ENCODE measurements at regions of chr5 and their contacts with region 1.

Region 1: GRCh38 chr5:172129256-172129910 is 58.6 kb downstream of the STK10 start:
- DNase-seq: no peak
- H3K4me3 ChIP-seq: no peak overlapping the region
- H3K27ac ChIP-seq: no peak overlapping the region
- H3K4me1 ChIP-seq: peaks cover 8 to 45% (median 21%) of the 10 kb centered on the region in 4 experiments
- H3K27me3 ChIP-seq: no peaks in the 10 kb centered on the region

Region 2: DNA sequence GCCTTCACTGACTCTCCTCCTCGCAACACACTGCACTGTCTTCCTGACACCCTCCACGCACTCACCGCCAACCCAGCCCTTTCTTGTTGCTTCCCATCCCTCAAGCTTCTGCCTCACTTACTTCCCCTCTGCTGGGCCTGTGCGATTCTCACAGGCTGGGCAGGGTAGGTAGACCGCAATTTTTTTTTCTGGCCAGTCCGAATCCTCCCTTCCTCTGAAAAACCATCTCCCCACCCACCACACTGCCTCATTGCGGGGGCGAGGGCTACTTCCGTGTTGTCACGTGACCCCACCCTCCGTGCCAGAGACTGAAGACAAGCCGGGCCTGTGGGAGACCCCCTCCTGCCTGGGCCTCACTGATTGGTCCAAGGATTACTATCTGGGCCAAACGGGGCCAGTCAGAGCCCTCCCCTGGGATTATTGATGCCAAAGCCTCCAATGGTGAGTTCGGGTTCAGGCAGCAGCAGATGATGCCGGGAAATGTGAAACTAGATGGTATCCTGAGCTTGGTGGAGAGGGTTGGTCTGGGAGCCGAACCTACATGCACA is 14.4 kb before region 1 on chr5:
- CTCF ChIA-PET with region 1: interaction called, 15 read pairs
- POLR2A ChIA-PET with region 1: interaction called, 5 read pairs
- DNase-seq: peak; percentile 91 to 97 (median 95)
- H3K4me3 ChIP-seq: peak overlapping the region in 4 of 7 experiments; percentile 20 to 51 (median 41)
- H3K27ac ChIP-seq: peak overlapping the region; percentile 25 to 62
- H3K4me1 ChIP-seq: peaks cover 22 to 91% (median 72%) of the 10 kb centered on the region in 4 experiments
- H3K27me3 ChIP-seq: no peaks in the 10 kb centered on the region

Region 3: GRCh38 chr5:172179361-172179989 is 50.1 kb after region 1 on chr5:
- CTCF ChIA-PET with region 1: interaction called, 10 read pairs
- POLR2A ChIA-PET with region 1: interaction called, 3 read pairs
- DNase-seq: peak; percentile 85 to 89 (median 87)
- H3K4me3 ChIP-seq: peak overlapping the region in 6 of 7 experiments; percentile 19 to 71 (median 54)
- H3K27ac ChIP-seq: peak overlapping the region; percentile 77 to 88
- H3K4me1 ChIP-seq: peaks cover 38 to 95% (median 81%) of the 10 kb centered on the region in 4 experiments
- H3K27me3 ChIP-seq: no peaks in the 10 kb centered on the region